Right ventricle myocardium superior (tissue), 1 donor: ENCODE measurements at regions of chr20 and their contacts with region 1.

Region 1: DNA sequence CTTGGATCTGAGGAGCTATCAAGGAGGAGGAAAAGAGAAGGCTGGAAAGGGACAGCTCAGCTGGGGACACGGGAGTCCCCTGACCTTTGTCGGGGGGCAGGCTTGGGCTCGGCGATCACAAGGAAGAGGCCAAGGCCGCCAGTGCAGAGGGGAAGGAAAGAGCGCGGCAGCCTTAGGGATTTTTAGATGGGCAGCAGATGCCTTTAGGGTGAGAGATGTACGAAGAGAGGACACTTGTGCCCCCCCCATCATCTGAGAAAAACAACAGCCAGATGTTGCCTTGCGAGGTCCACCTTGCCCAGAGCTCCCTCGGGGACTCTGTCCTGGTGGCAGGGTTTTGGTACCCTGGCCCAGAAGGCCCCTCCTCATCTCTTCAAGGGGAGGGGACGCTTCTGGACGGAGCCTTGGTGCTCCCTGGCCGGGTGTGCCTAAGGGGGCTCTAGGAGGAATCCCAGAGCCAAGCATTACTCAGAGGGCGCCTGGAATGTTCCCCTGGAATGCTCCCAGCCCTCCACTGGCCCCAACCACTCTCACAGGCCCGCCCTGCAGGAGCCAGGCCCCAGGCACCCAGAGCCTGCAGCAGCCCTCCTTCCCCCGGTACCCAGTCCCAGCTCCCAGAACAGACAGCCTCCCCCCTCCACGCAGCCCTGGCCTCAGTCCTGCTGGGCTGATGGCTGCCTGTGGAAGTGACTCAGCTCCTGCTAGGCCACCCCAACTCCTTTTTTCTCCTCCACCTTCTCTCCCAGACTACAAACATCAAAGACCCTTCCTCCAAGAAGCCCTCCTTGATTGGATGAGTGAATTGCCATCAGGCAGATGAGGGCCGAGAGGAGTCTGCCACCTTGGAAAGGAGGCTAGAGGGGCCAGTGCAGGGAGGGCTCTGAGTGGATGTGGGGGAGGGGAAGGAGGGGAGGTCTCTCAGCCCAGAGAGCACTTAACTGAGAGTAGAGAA is 1.8 kb downstream of the ADAM33 start:
- DNase-seq: peak; percentile 67
- ATAC-seq: peak; percentile 24

Region 2: DNA sequence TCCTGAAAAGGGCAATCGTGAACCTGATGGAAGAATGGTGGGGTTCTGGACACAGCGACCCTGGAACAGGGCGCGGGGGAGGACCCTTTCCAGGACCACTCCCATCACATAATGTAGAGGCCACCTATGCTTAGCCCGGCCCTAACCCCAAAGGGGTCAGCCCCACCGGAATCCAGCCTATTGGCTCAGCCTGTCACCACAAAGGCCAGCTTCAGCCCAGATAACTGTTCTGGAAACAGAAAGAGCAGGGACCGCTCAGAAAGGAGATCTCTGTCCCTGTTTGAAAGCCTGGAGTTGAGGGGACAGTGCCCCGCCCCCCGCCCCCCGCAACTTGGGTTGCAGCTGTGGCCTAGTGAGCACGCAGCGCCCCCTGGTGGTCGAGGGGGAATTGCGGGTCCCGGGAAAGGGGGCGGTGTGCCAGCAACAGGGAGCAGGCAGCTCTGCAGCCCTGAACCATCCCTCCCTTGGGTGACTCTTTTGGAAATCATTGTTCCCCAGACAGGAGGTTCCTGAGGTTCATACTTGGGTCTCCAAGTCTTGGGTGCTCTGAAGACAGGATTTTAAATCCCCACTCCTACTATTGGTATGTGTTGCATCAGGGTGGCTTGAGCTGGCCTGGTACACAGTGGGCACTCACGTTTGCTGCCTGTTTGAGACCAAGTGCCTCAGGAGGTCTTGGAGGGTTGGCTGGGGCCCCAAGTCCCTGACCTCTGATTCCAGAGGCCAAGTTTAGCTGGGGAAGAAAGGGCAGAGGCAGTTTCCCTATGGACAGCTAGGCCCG is 30.9 kb after region 1 on chr20:
- intact Hi-C with region 1: loop called (anchors 2 kb)
- DNase-seq: peak; percentile 91
- ATAC-seq: peak; percentile 59

Region 3: GRCh38 chr20:3753098-3753980 is 73.3 kb after region 1 on chr20:
- intact Hi-C with region 1: loop called (anchors 10 kb)
- DNase-seq: no peak
- ATAC-seq: peak; percentile 72

Region 4: DNA sequence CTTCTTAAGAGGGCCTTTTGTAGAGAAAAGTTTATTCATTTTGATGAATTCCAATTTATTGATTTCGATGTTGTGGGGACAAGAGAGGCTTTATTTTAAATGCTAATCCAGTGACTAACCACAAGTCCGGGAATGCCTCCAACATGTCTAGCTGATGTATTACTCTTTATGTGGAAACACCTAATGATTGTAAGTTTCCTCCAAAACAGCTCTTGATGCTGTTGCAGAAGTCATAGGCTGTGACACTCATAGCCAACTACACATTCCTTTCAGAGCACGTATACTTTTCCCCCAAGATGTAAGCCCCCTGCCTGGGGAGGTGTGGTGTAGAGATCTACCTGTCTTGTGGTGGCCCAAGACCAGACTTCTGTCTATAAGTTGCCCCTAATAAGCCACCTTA is 396.6 kb after region 1 on chr20:
- intact Hi-C with region 1: loop called (anchors 10 kb)
- DNase-seq: no peak
- ATAC-seq: no peak